ENCODE measurements at regions of chr2 and their contacts with region 1.

Region 1: DNA sequence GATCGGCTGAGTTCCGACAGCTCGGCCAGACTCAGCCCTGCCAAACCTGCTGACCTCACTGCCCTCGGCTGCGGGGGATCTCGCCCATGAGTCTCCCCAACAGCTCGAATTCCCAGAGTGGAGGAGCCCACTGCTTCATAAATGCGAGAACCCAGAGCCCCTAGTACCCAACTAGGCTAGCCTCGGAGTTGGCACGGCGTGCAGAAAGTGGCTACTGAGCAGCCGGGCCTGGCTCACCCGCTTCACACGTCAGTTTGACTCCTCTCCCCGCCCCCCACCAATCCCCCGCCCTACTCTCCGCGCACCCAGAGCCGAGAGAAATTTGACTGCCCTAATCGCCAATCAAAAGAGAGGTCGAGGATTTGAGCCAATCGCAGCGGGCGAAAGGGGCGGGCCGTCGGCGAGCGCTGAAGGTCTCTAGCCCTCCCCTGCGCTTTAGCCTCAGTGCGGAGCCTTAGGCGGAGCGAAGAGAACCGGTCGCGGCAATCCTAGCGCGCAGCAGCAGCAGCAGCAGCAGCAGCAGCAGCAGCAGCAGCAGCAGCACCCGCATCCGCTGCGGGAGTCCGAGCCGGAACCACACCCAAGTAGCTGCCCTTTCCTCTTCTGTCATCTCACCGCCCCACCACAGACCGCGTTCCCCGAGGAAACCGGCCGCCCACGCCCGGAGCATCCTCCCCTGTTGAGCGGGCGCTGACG is at the start of gene GLS:
- DNase-seq: peak; percentile 95 to 97
- ATAC-seq: peak; percentile 75 to 89 (median 82)
- H3K4me3 ChIP-seq: peak within 1 kb of the TSS; percentile 81
- H3K4me3 Mint-ChIP-seq: peak within 1 kb of the TSS; percentile 98
- H3K27ac ChIP-seq: peak within 1 kb of the TSS; percentile 95
- H3K27ac Mint-ChIP-seq: peak within 1 kb of the TSS; percentile 99 to 100
- H3K4me1 ChIP-seq: peaks cover 22% of the 10 kb centered on the region
- H3K4me1 Mint-ChIP-seq: peaks cover 46 to 47% of the 10 kb centered on the region in 2 donors
- H3K27me3 ChIP-seq: no peaks in the 10 kb centered on the region
- H3K27me3 Mint-ChIP-seq: peaks cover 0 to 2% of the 10 kb centered on the region in 2 donors
- CTCF ChIP-seq: no peak
- total RNA-seq, gene GLS: 279 to 322 (median 285) TPM

Region 2: GRCh38 chr2:190534310-190535120 is 346.0 kb before region 1 on chr2 and contains the start of gene NEMP2:
- intact Hi-C with region 1: loop called (anchors 10 kb)
- DNase-seq: peak; percentile 84 to 85
- ATAC-seq: peak; percentile 78 to 92 (median 83)
- H3K4me3 ChIP-seq: peak within 1 kb of the TSS; percentile 74
- H3K4me3 Mint-ChIP-seq: peak within 1 kb of the TSS; percentile 97
- H3K27ac ChIP-seq: peak within 1 kb of the TSS; percentile 93
- H3K27ac Mint-ChIP-seq: peak within 1 kb of the TSS; percentile 98 to 99
- H3K4me1 ChIP-seq: peaks cover 18% of the 10 kb centered on the region
- H3K4me1 Mint-ChIP-seq: peaks cover 44 to 45% of the 10 kb centered on the region in 2 donors
- H3K27me3 ChIP-seq: no peaks in the 10 kb centered on the region
- H3K27me3 Mint-ChIP-seq: no peaks in the 10 kb centered on the region
- CTCF ChIP-seq: no peak
- total RNA-seq, gene NEMP2: 17.2 to 21.0 (median 18.3) TPM

Region 3: GRCh38 chr2:190849774-190850173 is 30.8 kb before region 1 on chr2:
- intact Hi-C with region 1: loop called (anchors 1 kb)
- DNase-seq: no peak
- ATAC-seq: no peak
- H3K4me3 ChIP-seq: no peak overlapping the region
- H3K4me3 Mint-ChIP-seq: no peak overlapping the region
- H3K27ac ChIP-seq: no peak overlapping the region
- H3K27ac Mint-ChIP-seq: no peak overlapping the region
- H3K4me1 ChIP-seq: no peaks in the 10 kb centered on the region
- H3K4me1 Mint-ChIP-seq: no peaks in the 10 kb centered on the region
- H3K27me3 ChIP-seq: no peaks in the 10 kb centered on the region
- H3K27me3 Mint-ChIP-seq: no peaks in the 10 kb centered on the region
- CTCF ChIP-seq: no peak

Region 4: GRCh38 chr2:191128172-191128910 is 247.8 kb after region 1 on chr2:
- intact Hi-C with region 1: loop called (anchors 5 kb)
- DNase-seq: peak in 1 of 2 donors; percentile 65
- ATAC-seq: peak; percentile 68 to 86 (median 75)
- H3K4me3 ChIP-seq: peak overlapping the region; percentile 0
- H3K4me3 Mint-ChIP-seq: peak overlapping the region; percentile 71
- H3K27ac ChIP-seq: peak overlapping the region; percentile 86
- H3K27ac Mint-ChIP-seq: peak overlapping the region; percentile 86 to 98
- H3K4me1 ChIP-seq: peaks cover 34% of the 10 kb centered on the region
- H3K4me1 Mint-ChIP-seq: peaks cover 72 to 79% of the 10 kb centered on the region in 2 donors
- H3K27me3 ChIP-seq: no peaks in the 10 kb centered on the region
- H3K27me3 Mint-ChIP-seq: no peaks in the 10 kb centered on the region
- CTCF ChIP-seq: no peak

Region 5: GRCh38 chr2:191677646-191678436 is 797.3 kb after region 1 on chr2 and contains the start of gene NABP1:
- intact Hi-C with region 1: loop called (anchors 2 kb)
- DNase-seq: peak; percentile 98 to 99
- ATAC-seq: peak; percentile 85 to 97 (median 90)
- H3K4me3 ChIP-seq: peak within 1 kb of the TSS; percentile 63
- H3K4me3 Mint-ChIP-seq: peak within 1 kb of the TSS; percentile 98
- H3K27ac ChIP-seq: peak within 1 kb of the TSS; percentile 93
- H3K27ac Mint-ChIP-seq: peak within 1 kb of the TSS; percentile 99
- H3K4me1 ChIP-seq: peaks cover 35% of the 10 kb centered on the region
- H3K4me1 Mint-ChIP-seq: peaks cover 62 to 64% of the 10 kb centered on the region in 2 donors
- H3K27me3 ChIP-seq: no peaks in the 10 kb centered on the region
- H3K27me3 Mint-ChIP-seq: no peaks in the 10 kb centered on the region
- CTCF ChIP-seq: no peak
- total RNA-seq, gene NABP1: 44.5 to 52.2 (median 45.7) TPM